ENCODE measurements at regions of chr15 and their contacts with region 1.

Region 1: DNA sequence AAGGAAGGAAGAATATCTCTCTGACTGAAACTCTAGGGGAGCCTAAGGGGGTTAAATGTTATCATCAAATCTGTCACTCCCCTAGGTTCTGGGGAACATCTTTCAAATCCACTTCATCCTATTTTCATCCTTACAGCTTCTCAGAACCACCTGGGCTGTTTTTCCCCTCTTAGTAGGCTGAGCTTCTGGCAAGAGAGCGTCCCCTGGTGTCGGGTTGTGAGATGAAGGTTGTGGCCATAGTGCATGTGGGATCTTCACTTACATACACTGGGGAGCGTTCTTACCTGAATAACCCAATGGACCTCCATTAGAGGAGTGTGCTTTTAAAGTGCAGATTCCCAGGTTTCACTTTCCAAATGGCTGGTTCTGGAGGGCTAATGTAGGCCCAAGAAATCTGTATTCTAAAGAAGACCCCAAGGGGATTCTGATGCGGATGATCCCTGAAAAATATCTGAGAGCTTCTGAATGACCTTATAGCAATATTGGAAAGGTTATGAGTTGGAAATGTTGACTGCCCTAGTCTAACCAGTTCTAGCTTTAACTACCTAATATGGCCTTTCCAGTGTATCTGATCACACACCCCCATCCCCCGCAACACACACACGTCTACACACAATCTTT is 663.7 kb downstream of the AGBL1 start:
- DNase-seq: peak; percentile 75
- H3K4me3 Mint-ChIP-seq: no peak overlapping the region
- H3K27ac Mint-ChIP-seq: no peak overlapping the region
- H3K4me1 Mint-ChIP-seq: peaks cover 2% of the 10 kb centered on the region
- H3K27me3 Mint-ChIP-seq: no peaks in the 10 kb centered on the region

Region 2: DNA sequence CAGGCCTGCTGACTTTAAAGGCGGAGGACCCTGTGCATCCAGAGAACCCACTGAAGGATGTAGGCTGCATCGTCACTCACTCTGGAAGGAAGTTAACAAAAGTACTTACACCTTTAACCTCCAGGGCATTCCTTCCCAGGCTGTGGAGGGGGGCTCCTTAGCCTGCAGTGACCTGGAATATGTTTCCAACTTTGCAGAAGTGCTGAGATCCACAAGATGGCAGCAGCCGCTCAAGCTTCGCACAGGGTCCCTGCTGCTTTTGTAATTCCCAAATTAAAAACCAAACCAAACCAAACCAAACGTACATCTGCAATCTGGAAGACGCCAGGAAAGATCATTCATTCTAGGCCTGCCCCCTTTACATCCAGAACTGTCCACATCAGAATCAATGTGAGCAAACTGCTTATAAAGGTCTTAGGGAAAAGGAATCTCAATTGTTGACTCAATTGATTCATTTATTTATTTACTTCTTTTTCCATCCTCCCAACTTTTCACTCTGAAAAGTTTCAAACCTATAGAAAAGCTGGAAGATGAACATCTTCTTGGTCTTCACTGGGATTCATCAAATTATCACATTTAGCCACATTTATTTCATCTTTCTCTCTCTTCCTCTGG is 878.2 kb before region 1 on chr15:
- CTCF ChIA-PET with region 1: interaction called, 4 read pairs
- POLR2A ChIA-PET with region 1: no interaction called
- intact Hi-C with region 1: loop called (anchors 5 kb)
- DNase-seq: peak; percentile 29
- H3K4me3 Mint-ChIP-seq: no peak overlapping the region
- H3K27ac Mint-ChIP-seq: no peak overlapping the region
- H3K4me1 Mint-ChIP-seq: peaks cover 2% of the 10 kb centered on the region
- H3K27me3 Mint-ChIP-seq: no peaks in the 10 kb centered on the region

Region 3: GRCh38 chr15:86231864-86232721 is 511.3 kb before region 1 on chr15:
- CTCF ChIA-PET with region 1: interaction called, 9 read pairs
- POLR2A ChIA-PET with region 1: no interaction called
- intact Hi-C with region 1: loop called (anchors 5 kb)
- DNase-seq: peak; percentile 34
- H3K4me3 Mint-ChIP-seq: no peak overlapping the region
- H3K27ac Mint-ChIP-seq: no peak overlapping the region
- H3K4me1 Mint-ChIP-seq: peaks cover 3% of the 10 kb centered on the region
- H3K27me3 Mint-ChIP-seq: peaks cover 27% of the 10 kb centered on the region

Region 4: DNA sequence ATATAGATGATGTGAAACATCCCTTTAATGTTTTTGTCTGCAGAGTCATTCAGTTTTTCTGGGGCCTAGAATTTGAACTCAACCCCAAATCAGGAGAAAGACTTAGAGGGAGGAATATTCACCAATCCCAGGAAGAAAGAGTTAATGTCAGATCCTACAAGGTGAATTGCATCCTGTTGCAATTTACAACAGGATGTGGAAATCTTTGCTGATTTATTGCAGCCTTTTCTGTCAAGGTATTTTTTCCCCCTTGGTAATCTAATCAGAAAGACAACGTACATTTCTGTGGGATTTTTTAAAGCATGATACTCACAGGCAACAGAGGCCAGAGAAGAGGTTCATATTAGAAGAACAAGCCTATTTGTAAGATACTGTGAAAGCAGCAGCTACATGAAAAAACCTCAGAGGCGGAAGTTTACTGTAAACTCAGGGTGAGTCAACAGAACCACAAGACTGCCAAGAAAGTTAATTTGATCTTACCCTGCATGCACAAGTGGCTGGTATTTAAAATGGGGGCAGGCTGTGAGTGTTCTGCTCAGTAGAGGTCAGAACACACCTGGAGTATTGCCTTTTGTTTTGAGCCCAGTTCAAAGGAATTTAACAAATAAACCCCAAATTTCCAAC is 131.9 kb before region 1 on chr15:
- CTCF ChIA-PET with region 1: interaction called, 12 read pairs
- POLR2A ChIA-PET with region 1: no interaction called
- intact Hi-C with region 1: no loop called
- DNase-seq: peak; percentile 27
- H3K4me3 Mint-ChIP-seq: no peak overlapping the region
- H3K27ac Mint-ChIP-seq: peak overlapping the region; percentile 11
- H3K4me1 Mint-ChIP-seq: peaks cover 55% of the 10 kb centered on the region
- H3K27me3 Mint-ChIP-seq: no peaks in the 10 kb centered on the region

Region 5: GRCh38 chr15:86624261-86625036 is 118.9 kb before region 1 on chr15:
- CTCF ChIA-PET with region 1: interaction called, 118 read pairs
- POLR2A ChIA-PET with region 1: interaction called, 3 read pairs
- intact Hi-C with region 1: loop called (anchors 1 kb)
- DNase-seq: peak; percentile 91
- H3K4me3 Mint-ChIP-seq: peak overlapping the region; percentile 24
- H3K27ac Mint-ChIP-seq: peak overlapping the region; percentile 55
- H3K4me1 Mint-ChIP-seq: peaks cover 38% of the 10 kb centered on the region
- H3K27me3 Mint-ChIP-seq: no peaks in the 10 kb centered on the region

Region 6: GRCh38 chr15:86650093-86650492 is 93.3 kb before region 1 on chr15:
- CTCF ChIA-PET with region 1: interaction called, 11 read pairs
- POLR2A ChIA-PET with region 1: no interaction called
- intact Hi-C with region 1: loop called (anchors 10 kb)
- DNase-seq: peak; percentile 20
- H3K4me3 Mint-ChIP-seq: no peak overlapping the region
- H3K27ac Mint-ChIP-seq: peak overlapping the region; percentile 87
- H3K4me1 Mint-ChIP-seq: peaks cover 56% of the 10 kb centered on the region
- H3K27me3 Mint-ChIP-seq: no peaks in the 10 kb centered on the region

Region 7: DNA sequence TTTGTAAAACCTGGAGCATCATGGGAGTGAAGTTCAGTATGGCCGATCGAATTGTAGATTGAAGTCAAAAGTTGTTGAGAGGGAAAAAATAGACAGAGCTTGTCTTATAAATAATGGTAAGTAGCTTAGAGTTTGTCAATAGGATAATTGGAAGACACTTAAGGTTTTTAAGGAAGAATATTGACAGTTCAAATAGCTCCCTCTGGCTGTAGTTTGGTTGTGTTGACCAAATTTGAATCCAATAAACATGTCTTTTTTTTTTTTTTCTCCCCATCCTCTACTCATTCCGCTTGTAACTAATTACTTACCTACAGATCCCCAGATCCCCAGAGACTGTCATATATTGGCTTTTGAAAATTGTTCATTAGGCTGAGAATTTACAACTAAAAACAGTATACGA is 13.3 kb after region 1 on chr15:
- CTCF ChIA-PET with region 1: interaction called, 11 read pairs
- POLR2A ChIA-PET with region 1: no interaction called
- intact Hi-C with region 1: no loop called
- DNase-seq: no peak
- H3K4me3 Mint-ChIP-seq: no peak overlapping the region
- H3K27ac Mint-ChIP-seq: no peak overlapping the region
- H3K4me1 Mint-ChIP-seq: no peaks in the 10 kb centered on the region
- H3K27me3 Mint-ChIP-seq: peaks cover 19% of the 10 kb centered on the region

Region 8: GRCh38 chr15:86813907-86814306 is 70.5 kb after region 1 on chr15:
- CTCF ChIA-PET with region 1: no interaction called
- POLR2A ChIA-PET with region 1: no interaction called
- intact Hi-C with region 1: no loop called
- DNase-seq: no peak
- H3K4me3 Mint-ChIP-seq: no peak overlapping the region
- H3K27ac Mint-ChIP-seq: no peak overlapping the region
- H3K4me1 Mint-ChIP-seq: no peaks in the 10 kb centered on the region
- H3K27me3 Mint-ChIP-seq: peaks cover 8% of the 10 kb centered on the region

Measured in activated CD4-positive, alpha-beta memory T cell treated with anti-CD3 and anti-CD28 coated beads for 36 hours (primary cell).